Activated naive CD4-positive, alpha-beta T cell treated with anti-CD3 and anti-CD28 coated beads, Interleukin-2, amount 10 ng/mL, durations not matched to agents 7 days and 5 days (primary cell): ENCODE measurements at regions of chr2 and their contacts with region 1.

Region 1: DNA sequence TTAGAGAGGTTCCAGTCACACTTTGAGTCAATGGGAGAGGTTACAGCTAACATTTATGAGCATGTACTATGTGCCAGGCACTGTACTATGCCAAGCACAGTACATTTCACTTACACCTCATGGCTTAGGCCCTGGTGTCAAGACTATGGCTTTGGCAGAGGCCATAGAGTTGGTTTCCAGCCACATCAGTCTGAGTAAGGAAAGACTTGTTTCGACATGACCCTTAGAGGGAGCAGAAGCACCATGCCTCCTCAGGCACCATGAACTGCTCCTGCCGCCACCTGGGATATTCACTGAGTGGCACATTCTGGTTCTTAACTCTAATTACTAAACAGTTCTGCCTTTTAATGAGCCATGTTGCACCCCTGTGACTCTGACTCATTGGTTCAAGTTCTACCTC is 12.7 kb downstream of the DGUOK start:
- DNase-seq: peak; percentile 47
- H3K4me3 Mint-ChIP-seq: no peak overlapping the region
- H3K27ac Mint-ChIP-seq: no peak overlapping the region
- H3K4me1 Mint-ChIP-seq: peaks cover 40% of the 10 kb centered on the region
- H3K27me3 Mint-ChIP-seq: no peaks in the 10 kb centered on the region

Region 2: DNA sequence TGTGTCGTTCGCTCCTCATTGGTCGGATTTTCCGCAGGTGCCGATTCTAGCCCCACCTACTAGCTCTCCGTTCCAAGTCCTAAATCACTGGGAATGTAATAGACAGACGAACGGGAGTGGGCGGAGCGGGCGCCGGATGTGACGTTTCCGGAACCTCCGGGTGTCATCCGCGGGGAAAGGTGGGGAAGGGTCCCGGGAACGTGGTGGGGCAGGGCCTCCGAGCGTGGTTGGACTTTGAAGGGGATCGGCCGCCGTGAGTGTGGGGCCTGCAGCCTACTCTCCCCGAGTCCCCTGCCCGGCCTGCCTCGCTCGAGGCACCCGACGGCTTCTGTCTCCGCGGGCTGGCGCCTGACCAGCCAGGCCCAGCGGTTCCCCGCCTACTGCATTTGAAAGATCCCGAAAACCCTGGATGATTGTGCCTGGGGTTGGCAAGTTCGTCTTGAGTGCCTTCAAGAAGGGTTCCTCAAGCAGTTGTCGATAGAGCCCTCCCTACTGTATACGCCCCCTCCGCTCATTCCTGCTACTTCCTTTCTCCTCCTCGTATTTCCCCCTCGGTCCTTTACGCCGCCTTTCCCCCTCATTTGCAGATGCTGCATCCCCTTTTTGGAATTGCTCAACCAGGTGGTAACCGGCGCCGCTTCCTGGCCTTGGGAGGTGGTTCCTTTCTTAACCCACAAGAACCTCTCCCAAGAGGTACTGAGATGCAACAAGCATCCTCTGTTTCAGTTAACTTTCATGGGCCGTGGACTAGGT is 110.4 kb before region 1 on chr2 and contains the start of gene STAMBP:
- CTCF ChIA-PET with region 1: interaction called, 22 read pairs
- DNase-seq: peak; percentile 97
- H3K4me3 Mint-ChIP-seq: peak within 1 kb of the TSS; percentile 91
- H3K27ac Mint-ChIP-seq: peak within 1 kb of the TSS; percentile 94
- H3K4me1 Mint-ChIP-seq: peaks cover 40% of the 10 kb centered on the region
- H3K27me3 Mint-ChIP-seq: peaks cover 4% of the 10 kb centered on the region

Region 3: GRCh38 chr2:73851274-73851673 is 88.1 kb before region 1 on chr2:
- CTCF ChIA-PET with region 1: no interaction called
- DNase-seq: peak; percentile 26
- H3K4me3 Mint-ChIP-seq: no peak overlapping the region
- H3K27ac Mint-ChIP-seq: no peak overlapping the region
- H3K4me1 Mint-ChIP-seq: no peaks in the 10 kb centered on the region
- H3K27me3 Mint-ChIP-seq: no peaks in the 10 kb centered on the region

Region 4: DNA sequence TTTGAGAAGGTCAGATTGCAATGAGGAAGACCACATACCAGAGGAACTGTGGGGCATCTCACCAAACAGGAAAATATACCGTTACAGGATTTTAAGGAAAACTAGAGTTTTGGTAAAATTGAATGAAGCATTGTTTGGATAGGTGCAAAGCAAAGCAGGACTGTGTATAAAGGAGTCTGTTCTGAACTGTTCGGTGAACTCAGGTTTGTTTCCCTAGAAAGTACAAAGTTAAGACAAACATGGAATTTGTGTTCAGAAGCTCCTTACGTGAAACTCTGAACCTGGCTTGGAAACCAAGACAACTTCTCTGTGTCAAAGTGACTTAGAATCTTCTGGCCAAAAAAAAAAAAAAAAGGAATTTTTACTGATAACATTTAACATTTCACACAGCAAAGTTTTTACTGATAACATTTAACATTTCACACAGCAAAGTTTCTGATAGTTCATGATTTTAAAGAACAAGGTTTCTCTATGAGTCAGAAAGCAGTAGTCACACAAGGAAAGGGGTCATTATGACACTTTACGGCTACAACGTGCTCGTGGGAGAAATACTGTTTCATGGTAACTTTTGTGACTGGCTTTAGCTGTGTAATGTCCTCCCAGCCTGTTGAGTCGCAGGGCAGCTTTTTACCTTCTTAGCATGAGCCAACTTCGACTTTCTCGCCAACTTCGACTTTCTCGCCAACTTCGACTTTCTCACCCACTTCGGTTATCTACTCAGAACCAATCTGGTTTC is 24.1 kb after region 1 on chr2:
- CTCF ChIA-PET with region 1: no interaction called
- DNase-seq: no peak
- H3K4me3 Mint-ChIP-seq: no peak overlapping the region
- H3K27ac Mint-ChIP-seq: no peak overlapping the region
- H3K4me1 Mint-ChIP-seq: peaks cover 36% of the 10 kb centered on the region
- H3K27me3 Mint-ChIP-seq: no peaks in the 10 kb centered on the region

Region 5: GRCh38 chr2:74186038-74186437 is 246.6 kb after region 1 on chr2:
- CTCF ChIA-PET with region 1: no interaction called
- DNase-seq: peak; percentile 39
- H3K4me3 Mint-ChIP-seq: no peak overlapping the region
- H3K27ac Mint-ChIP-seq: peak overlapping the region; percentile 75
- H3K4me1 Mint-ChIP-seq: peaks cover 19% of the 10 kb centered on the region
- H3K27me3 Mint-ChIP-seq: peaks cover 7% of the 10 kb centered on the region